ENCODE measurements at regions of chr2 and their contacts with region 1.

Region 1: DNA sequence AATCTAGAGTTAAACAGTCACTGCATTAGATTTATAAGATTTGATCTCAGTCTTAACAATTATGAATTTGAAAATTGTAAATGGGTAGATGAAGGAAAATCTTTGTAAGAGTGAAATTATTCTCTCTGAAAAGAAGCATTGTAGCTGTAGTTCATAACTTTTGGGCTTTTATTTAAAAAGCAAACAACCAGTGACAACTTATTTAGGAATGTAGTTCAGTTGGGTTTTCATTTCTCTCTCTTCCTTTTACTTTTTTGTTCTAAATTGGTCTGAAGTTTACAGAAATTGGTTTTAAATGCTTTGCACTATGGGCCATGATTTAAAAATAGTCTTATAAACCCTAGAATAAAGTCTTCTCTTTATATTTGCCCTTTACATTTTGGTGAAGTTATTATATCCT is 296.6 kb downstream of the GULP1 start:
- DNase-seq: no peak
- ATAC-seq: no peak
- H3K4me3 ChIP-seq: no peak overlapping the region
- H3K27ac ChIP-seq: no peak overlapping the region
- H3K4me1 ChIP-seq: no peaks in the 10 kb centered on the region
- H3K27me3 ChIP-seq: no peaks in the 10 kb centered on the region

Region 2: GRCh38 chr2:188529746-188530145 is 58.5 kb before region 1 on chr2:
- intact Hi-C with region 1: loop called in 1 of 2 experiments (anchors 5 kb)
- DNase-seq: no peak
- ATAC-seq: no peak
- H3K4me3 ChIP-seq: no peak overlapping the region
- H3K27ac ChIP-seq: no peak overlapping the region
- H3K4me1 ChIP-seq: no peaks in the 10 kb centered on the region
- H3K27me3 ChIP-seq: no peaks in the 10 kb centered on the region

Region 3: DNA sequence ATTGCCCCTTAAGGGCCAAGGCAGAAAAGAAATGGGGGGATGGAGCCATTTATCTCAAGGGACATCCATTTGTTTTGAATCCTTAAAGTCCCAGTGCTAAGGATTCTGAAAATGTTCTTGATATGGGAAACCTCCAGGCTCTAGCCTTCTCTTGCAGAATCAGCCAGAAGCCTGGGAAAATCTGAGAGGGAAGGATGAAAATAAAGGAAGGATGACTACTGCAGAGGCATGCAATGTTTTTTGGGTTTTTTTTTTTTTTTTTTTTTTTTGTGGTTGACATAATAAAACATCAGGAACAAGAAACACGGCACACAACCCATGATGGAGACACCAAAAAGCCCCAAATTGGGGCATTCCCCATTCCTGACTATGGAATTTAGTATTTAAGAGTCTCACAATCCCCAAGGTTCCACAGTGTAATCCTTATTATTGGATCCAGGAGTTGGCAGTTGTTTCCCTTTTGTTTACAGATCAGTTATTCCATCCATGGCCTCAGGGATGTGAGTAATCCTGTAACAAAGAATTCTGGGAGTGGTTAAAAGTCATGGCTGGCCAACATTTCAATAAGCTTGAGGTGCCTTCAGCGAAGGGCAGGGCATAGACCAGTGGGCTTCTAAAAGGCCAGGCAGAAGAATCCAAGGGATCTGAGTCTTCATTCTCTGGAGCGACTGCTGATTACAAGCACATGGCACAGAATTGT is 40.9 kb after region 1 on chr2:
- intact Hi-C with region 1: no loop called
- DNase-seq: no peak
- ATAC-seq: peak; percentile 40
- H3K4me3 ChIP-seq: no peak overlapping the region
- H3K27ac ChIP-seq: peak overlapping the region; percentile 12 to 57
- H3K4me1 ChIP-seq: peaks cover 0 to 2% of the 10 kb centered on the region in 2 donors
- H3K27me3 ChIP-seq: no peaks in the 10 kb centered on the region

Measured in aorta (tissue), 5 donors.